Activated CD4-positive, alpha-beta T cell treated with anti-CD3 and anti-CD28 coated beads for 36 hours (primary cell): ENCODE measurements at regions of chr16 and their contacts with region 1.

Region 1: GRCh38 chr16:68244903-68245853 is at the start of gene PLA2G15:
- DNase-seq: peak; percentile 98
- ATAC-seq: peak; percentile 98
- H3K4me3 Mint-ChIP-seq: peak within 1 kb of the TSS; percentile 88
- H3K27ac Mint-ChIP-seq: peak within 1 kb of the TSS; percentile 83
- H3K4me1 Mint-ChIP-seq: peaks cover 15% of the 10 kb centered on the region
- H3K27me3 Mint-ChIP-seq: no peaks in the 10 kb centered on the region
- total RNA-seq, gene PLA2G15: 6.0 to 7.0 TPM

Region 2: GRCh38 chr16:68049449-68049848 is 195.7 kb before region 1 on chr16:
- CTCF ChIA-PET with region 1: no interaction called
- POLR2A ChIA-PET with region 1: no interaction called
- intact Hi-C with region 1: no loop called
- DNase-seq: no peak
- ATAC-seq: peak; percentile 19
- H3K4me3 Mint-ChIP-seq: no peak overlapping the region
- H3K27ac Mint-ChIP-seq: no peak overlapping the region
- H3K4me1 Mint-ChIP-seq: peaks cover 2% of the 10 kb centered on the region
- H3K27me3 Mint-ChIP-seq: no peaks in the 10 kb centered on the region

Region 3: GRCh38 chr16:68310761-68311511 is 65.8 kb after region 1 on chr16 and contains the starts of genes PRMT7 and SLC7A6OS:
- CTCF ChIA-PET with region 1: no interaction called
- POLR2A ChIA-PET with region 1: no interaction called
- intact Hi-C with region 1: loop called in 1 of 2 experiments (anchors 1 kb)
- DNase-seq: peak; percentile 97
- ATAC-seq: peak; percentile 99
- H3K4me3 Mint-ChIP-seq: peak within 1 kb of the TSS; percentile 90
- H3K27ac Mint-ChIP-seq: peak within 1 kb of the TSS; percentile 92
- H3K4me1 Mint-ChIP-seq: peaks cover 42% of the 10 kb centered on the region
- H3K27me3 Mint-ChIP-seq: no peaks in the 10 kb centered on the region
- total RNA-seq, gene PRMT7: 62.7 to 70.7 TPM
- total RNA-seq, gene SLC7A6OS: 17.4 to 21.7 TPM